AG04450 (cell line): ENCODE measurements at regions of chr13 and their contacts with region 1.

Region 1: GRCh38 chr13:27826379-27827353 is 34.4 kb downstream of the GSX1 start:
- DNase-seq: peak; percentile 59
- H3K4me3 ChIP-seq: peak overlapping the region; percentile 49
- H3K27ac ChIP-seq: no peak overlapping the region
- H3K27me3 ChIP-seq: peaks cover 21% of the 10 kb centered on the region
- CTCF ChIP-seq: peak; percentile 88

Region 2: DNA sequence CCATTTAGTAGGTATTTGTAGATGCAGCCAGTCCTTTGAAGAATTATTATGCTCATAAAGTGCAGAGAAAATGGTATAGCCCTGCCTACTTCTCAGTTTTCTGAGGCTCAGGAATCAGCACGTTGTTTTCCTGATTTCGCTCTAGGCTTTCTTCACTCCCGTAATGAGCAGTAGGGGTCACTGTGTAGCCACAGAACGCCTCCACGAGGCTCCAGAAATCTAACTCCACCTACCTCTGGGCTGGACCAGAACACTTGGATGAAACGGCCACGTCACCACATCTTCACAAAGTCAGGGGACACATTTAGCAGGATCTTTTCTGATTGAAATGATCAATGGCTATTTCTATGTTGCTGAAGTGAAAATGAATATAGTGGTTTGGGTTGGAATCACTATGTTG is 452.0 kb before region 1 on chr13:
- CTCF ChIA-PET with region 1: interaction called, 141 read pairs
- POLR2A ChIA-PET with region 1: no interaction called
- DNase-seq: peak; percentile 59
- H3K4me3 ChIP-seq: no peak overlapping the region
- H3K27ac ChIP-seq: no peak overlapping the region
- H3K27me3 ChIP-seq: peaks cover 12% of the 10 kb centered on the region
- CTCF ChIP-seq: peak; percentile 85

Region 3: GRCh38 chr13:27424246-27425157 is 402.2 kb before region 1 on chr13 and contains the start of gene GTF3A:
- CTCF ChIA-PET with region 1: interaction called, 11 read pairs
- POLR2A ChIA-PET with region 1: no interaction called
- DNase-seq: peak; percentile 52
- H3K4me3 ChIP-seq: peak within 1 kb of the TSS; percentile 85
- H3K27ac ChIP-seq: peak within 1 kb of the TSS; percentile 21
- H3K27me3 ChIP-seq: no peaks in the 10 kb centered on the region
- CTCF ChIP-seq: no peak
- polyA plus RNA-seq, gene GTF3A: 89.0 and 104 TPM in 2 replicates

Region 4: DNA sequence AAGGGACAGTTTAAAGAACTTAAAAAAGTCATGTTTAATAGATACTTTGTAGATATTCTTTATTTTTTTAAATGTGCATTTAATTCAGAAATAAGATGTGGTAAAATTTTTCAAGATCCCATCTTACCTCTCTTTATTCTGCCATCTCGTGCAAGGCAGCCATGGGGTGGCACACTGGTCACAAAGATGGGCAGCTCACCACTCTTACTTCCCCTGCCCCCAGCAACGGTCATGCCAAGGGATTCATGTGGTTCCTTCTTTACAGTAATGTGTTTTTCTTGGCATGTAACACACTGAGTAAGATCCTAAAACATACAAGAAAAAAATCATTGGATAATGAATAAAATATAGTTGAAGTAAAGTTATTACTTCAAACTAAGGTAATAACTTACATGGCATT is 270.6 kb before region 1 on chr13:
- CTCF ChIA-PET with region 1: interaction called, 30 read pairs
- POLR2A ChIA-PET with region 1: no interaction called
- DNase-seq: no peak
- H3K4me3 ChIP-seq: no peak overlapping the region
- H3K27ac ChIP-seq: no peak overlapping the region
- H3K27me3 ChIP-seq: no peaks in the 10 kb centered on the region
- CTCF ChIP-seq: peak; percentile 19; the same call in 1 of the 2 replicates

Region 5: DNA sequence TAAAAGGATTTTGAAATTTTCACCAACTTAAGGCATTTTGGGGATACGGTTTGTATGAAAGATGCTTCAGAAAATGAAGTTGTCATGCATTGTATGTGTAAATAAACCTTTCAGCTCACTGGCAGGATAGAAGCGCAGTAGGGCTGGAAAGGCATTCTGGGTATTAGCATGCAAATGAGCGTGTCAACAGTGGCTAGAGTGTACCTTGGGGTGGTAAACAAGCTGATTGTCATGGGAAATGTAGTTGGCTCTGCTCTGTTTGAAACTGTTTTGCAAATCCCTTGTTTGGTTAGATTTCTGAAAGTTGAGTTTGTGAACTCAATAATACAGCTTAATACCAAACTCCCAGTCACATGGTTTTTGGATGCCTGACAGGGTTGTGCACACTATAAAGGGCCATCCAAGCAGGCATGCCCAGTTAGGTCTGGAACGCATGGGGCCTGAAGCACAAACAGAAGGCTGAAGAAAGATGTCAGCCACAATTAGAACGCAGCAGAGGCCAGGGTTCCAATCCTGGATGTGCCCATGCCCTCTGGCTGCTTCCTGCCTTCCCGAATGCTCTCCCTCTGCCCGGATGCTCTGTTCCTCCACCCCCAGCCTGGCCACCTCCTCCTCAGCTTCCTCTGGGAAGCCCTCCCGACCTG is 19.8 kb before region 1 on chr13:
- CTCF ChIA-PET with region 1: interaction called, 11 read pairs
- POLR2A ChIA-PET with region 1: no interaction called
- DNase-seq: no peak
- H3K4me3 ChIP-seq: no peak overlapping the region
- H3K27ac ChIP-seq: no peak overlapping the region
- H3K27me3 ChIP-seq: peaks cover 2% of the 10 kb centered on the region
- CTCF ChIP-seq: no peak

Region 6: DNA sequence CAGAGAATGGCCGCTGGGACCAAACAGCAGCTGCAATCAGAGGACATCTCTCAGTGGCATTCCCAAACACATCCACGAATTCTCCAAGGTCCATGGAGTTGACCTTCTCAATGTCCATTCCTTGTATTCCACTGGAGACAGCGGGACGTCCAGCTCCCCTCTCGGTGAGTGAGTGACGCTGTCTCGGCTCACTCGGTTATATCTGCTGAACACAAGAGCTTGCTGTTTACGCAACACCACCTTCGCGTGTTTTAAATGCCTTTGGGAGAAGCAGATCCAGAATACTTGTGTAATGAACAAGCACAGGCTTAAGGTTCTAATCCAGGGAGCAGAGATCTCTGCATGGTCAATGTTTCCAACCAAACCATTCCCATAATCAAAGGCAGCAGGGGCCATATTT is 161.9 kb after region 1 on chr13 and contains the start of gene URAD:
- CTCF ChIA-PET with region 1: interaction called, 219 read pairs
- POLR2A ChIA-PET with region 1: no interaction called
- DNase-seq: no peak
- H3K4me3 ChIP-seq: no peak within 1 kb of the TSS
- H3K27ac ChIP-seq: no peak within 1 kb of the TSS
- H3K27me3 ChIP-seq: peaks cover 21% of the 10 kb centered on the region
- CTCF ChIP-seq: no peak
- polyA plus RNA-seq, gene URAD: not detected in 2 replicates

Region 7: GRCh38 chr13:28022848-28023518 is 196.3 kb after region 1 on chr13:
- CTCF ChIA-PET with region 1: no interaction called
- POLR2A ChIA-PET with region 1: no interaction called
- DNase-seq: no peak
- H3K4me3 ChIP-seq: no peak overlapping the region
- H3K27ac ChIP-seq: peak overlapping the region; percentile 39
- H3K27me3 ChIP-seq: no peaks in the 10 kb centered on the region
- CTCF ChIP-seq: no peak

Region 8: DNA sequence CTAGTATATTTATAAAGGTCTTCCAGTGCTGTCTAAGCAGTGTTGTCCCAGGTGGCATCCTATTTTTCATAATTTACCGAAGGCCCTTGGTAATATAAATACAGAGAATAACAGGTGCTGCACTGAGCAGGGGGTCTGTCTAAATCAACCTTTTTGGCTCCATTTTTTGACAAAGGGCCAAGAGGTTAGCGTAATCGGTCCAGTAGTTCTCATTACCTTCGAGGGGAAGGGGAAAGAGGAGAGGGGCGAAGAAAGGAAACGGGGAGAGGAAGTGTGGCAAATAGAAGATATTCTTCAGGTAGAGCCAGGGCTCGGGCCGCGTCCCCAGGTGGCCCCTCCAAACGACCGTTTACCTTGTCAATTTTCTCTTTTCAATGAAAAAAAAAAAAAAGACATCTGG is 310.9 kb after region 1 on chr13:
- CTCF ChIA-PET with region 1: no interaction called
- POLR2A ChIA-PET with region 1: no interaction called
- DNase-seq: no peak
- H3K4me3 ChIP-seq: peak overlapping the region; percentile 92
- H3K27ac ChIP-seq: peak overlapping the region; percentile 92
- H3K27me3 ChIP-seq: no peaks in the 10 kb centered on the region
- CTCF ChIP-seq: no peak

Region 9: GRCh38 chr13:28161370-28161769 is 334.7 kb after region 1 on chr13:
- CTCF ChIA-PET with region 1: no interaction called
- POLR2A ChIA-PET with region 1: no interaction called
- DNase-seq: no peak
- H3K4me3 ChIP-seq: no peak overlapping the region
- H3K27ac ChIP-seq: no peak overlapping the region
- H3K27me3 ChIP-seq: no peaks in the 10 kb centered on the region
- CTCF ChIP-seq: no peak

Region 10: GRCh38 chr13:28568288-28568687 is 741.6 kb after region 1 on chr13:
- CTCF ChIA-PET with region 1: no interaction called
- POLR2A ChIA-PET with region 1: no interaction called
- DNase-seq: peak; percentile 23
- H3K4me3 ChIP-seq: no peak overlapping the region
- H3K27ac ChIP-seq: no peak overlapping the region
- H3K27me3 ChIP-seq: no peaks in the 10 kb centered on the region
- CTCF ChIP-seq: no peak